B cell (primary cell): ENCODE measurements at regions of chr19 and their contacts with region 1.

Region 1: GRCh38 chr19:5622463-5623396 is at the starts of genes SAFB and SAFB2:
- DNase-seq: peak; percentile 100
- ATAC-seq: peak; percentile 81
- H3K4me3 ChIP-seq: peak within 1 kb of the TSS; percentile 94 to 98 (median 98)
- H3K4me3 Mint-ChIP-seq: peak within 1 kb of the TSS; percentile 99
- H3K27ac ChIP-seq: peak within 1 kb of the TSS; percentile 92 to 95
- H3K27ac Mint-ChIP-seq: peak within 1 kb of the TSS; percentile 98
- H3K4me1 ChIP-seq: peaks cover 60 to 68% of the 10 kb centered on the region in 2 donors
- H3K4me1 Mint-ChIP-seq: peaks cover 74% of the 10 kb centered on the region
- H3K27me3 ChIP-seq: no peaks in the 10 kb centered on the region
- H3K27me3 Mint-ChIP-seq: no peaks in the 10 kb centered on the region
- CTCF ChIP-seq: no peak
- total RNA-seq, gene SAFB: 221 and 237 TPM in 2 replicates
- total RNA-seq, gene SAFB2: 242 and 257 TPM in 2 replicates

Region 2: GRCh38 chr19:5138606-5139582 is 483.8 kb before region 1 on chr19:
- CTCF ChIA-PET with region 1: no interaction called
- POLR2A ChIA-PET with region 1: no interaction called
- intact Hi-C with region 1: loop called (anchors 10 kb)
- DNase-seq: peak; percentile 90
- ATAC-seq: peak; percentile 68
- H3K4me3 ChIP-seq: peak overlapping the region in 4 of 5 experiments; percentile 1 to 40 (median 20)
- H3K4me3 Mint-ChIP-seq: peak overlapping the region; percentile 85
- H3K27ac ChIP-seq: peak overlapping the region; percentile 59 to 63
- H3K27ac Mint-ChIP-seq: peak overlapping the region; percentile 97
- H3K4me1 ChIP-seq: peaks cover 70 to 99% of the 10 kb centered on the region in 2 donors
- H3K4me1 Mint-ChIP-seq: peaks cover 75% of the 10 kb centered on the region
- H3K27me3 ChIP-seq: no peaks in the 10 kb centered on the region
- H3K27me3 Mint-ChIP-seq: no peaks in the 10 kb centered on the region
- CTCF ChIP-seq: peak; percentile 13

Region 3: GRCh38 chr19:5547881-5548280 is 74.8 kb before region 1 on chr19:
- CTCF ChIA-PET with region 1: no interaction called
- POLR2A ChIA-PET with region 1: no interaction called
- intact Hi-C with region 1: no loop called
- DNase-seq: no peak
- ATAC-seq: no peak
- H3K4me3 ChIP-seq: no peak overlapping the region
- H3K4me3 Mint-ChIP-seq: no peak overlapping the region
- H3K27ac ChIP-seq: no peak overlapping the region
- H3K27ac Mint-ChIP-seq: no peak overlapping the region
- H3K4me1 ChIP-seq: no peaks in the 10 kb centered on the region
- H3K4me1 Mint-ChIP-seq: no peaks in the 10 kb centered on the region
- H3K27me3 ChIP-seq: no peaks in the 10 kb centered on the region
- H3K27me3 Mint-ChIP-seq: peaks cover 3% of the 10 kb centered on the region
- CTCF ChIP-seq: no peak

Region 4: GRCh38 chr19:5680437-5681368 is 58.0 kb after region 1 on chr19 and contains the starts of genes HSD11B1L and MICOS13:
- CTCF ChIA-PET with region 1: no interaction called
- POLR2A ChIA-PET with region 1: no interaction called
- intact Hi-C with region 1: loop called (anchors 1 kb)
- DNase-seq: peak; percentile 100
- ATAC-seq: peak; percentile 93
- H3K4me3 ChIP-seq: peak within 1 kb of the TSS; percentile 65 to 100 (median 81)
- H3K4me3 Mint-ChIP-seq: peak within 1 kb of the TSS; percentile 93
- H3K27ac ChIP-seq: peak within 1 kb of the TSS; percentile 96 to 98
- H3K27ac Mint-ChIP-seq: peak within 1 kb of the TSS; percentile 99
- H3K4me1 ChIP-seq: peaks cover 14 to 17% of the 10 kb centered on the region in 2 donors
- H3K4me1 Mint-ChIP-seq: peaks cover 25% of the 10 kb centered on the region
- H3K27me3 ChIP-seq: no peaks in the 10 kb centered on the region
- H3K27me3 Mint-ChIP-seq: no peaks in the 10 kb centered on the region
- CTCF ChIP-seq: no peak
- total RNA-seq, gene HSD11B1L: 1.4 and 1.8 TPM in 2 replicates
- total RNA-seq, gene MICOS13: 30.8 and 34.5 TPM in 2 replicates

Region 5: GRCh38 chr19:5719961-5720790 is 97.4 kb after region 1 on chr19 and contains the starts of genes CATSPERD and LONP1:
- CTCF ChIA-PET with region 1: no interaction called
- POLR2A ChIA-PET with region 1: interaction called, 9 read pairs
- intact Hi-C with region 1: loop called (anchors 1 kb)
- DNase-seq: peak; percentile 100
- ATAC-seq: peak; percentile 86
- H3K4me3 ChIP-seq: peak within 1 kb of the TSS; percentile 73 to 95 (median 91)
- H3K4me3 Mint-ChIP-seq: peak within 1 kb of the TSS; percentile 95
- H3K27ac ChIP-seq: peak within 1 kb of the TSS; percentile 87 to 98
- H3K27ac Mint-ChIP-seq: peak within 1 kb of the TSS; percentile 99
- H3K4me1 ChIP-seq: peaks cover 12 to 26% of the 10 kb centered on the region in 2 donors
- H3K4me1 Mint-ChIP-seq: peaks cover 27% of the 10 kb centered on the region
- H3K27me3 ChIP-seq: no peaks in the 10 kb centered on the region
- H3K27me3 Mint-ChIP-seq: peaks cover 3% of the 10 kb centered on the region
- CTCF ChIP-seq: peak; percentile 86
- total RNA-seq, gene CATSPERD: not detected in 2 replicates
- total RNA-seq, gene LONP1: 67.2 and 70.3 TPM in 2 replicates

Region 6: GRCh38 chr19:5904352-5905113 is 281.8 kb after region 1 on chr19 and contains the start of gene VMAC:
- CTCF ChIA-PET with region 1: no interaction called
- POLR2A ChIA-PET with region 1: interaction called, 3 read pairs
- intact Hi-C with region 1: loop called (anchors 2 kb)
- DNase-seq: peak; percentile 100
- ATAC-seq: peak; percentile 77
- H3K4me3 ChIP-seq: peak within 1 kb of the TSS; percentile 86 to 99 (median 98)
- H3K4me3 Mint-ChIP-seq: peak within 1 kb of the TSS; percentile 92
- H3K27ac ChIP-seq: peak within 1 kb of the TSS; percentile 79 to 85
- H3K27ac Mint-ChIP-seq: peak within 1 kb of the TSS; percentile 96
- H3K4me1 ChIP-seq: peaks cover 11 to 25% of the 10 kb centered on the region in 2 donors
- H3K4me1 Mint-ChIP-seq: peaks cover 38% of the 10 kb centered on the region
- H3K27me3 ChIP-seq: no peaks in the 10 kb centered on the region
- H3K27me3 Mint-ChIP-seq: no peaks in the 10 kb centered on the region
- CTCF ChIP-seq: no peak
- total RNA-seq, gene VMAC: 27.1 and 27.8 TPM in 2 replicates